Calu3 (cell line): ENCODE measurements at regions of chr15 and their contacts with region 1.

Region 1: DNA sequence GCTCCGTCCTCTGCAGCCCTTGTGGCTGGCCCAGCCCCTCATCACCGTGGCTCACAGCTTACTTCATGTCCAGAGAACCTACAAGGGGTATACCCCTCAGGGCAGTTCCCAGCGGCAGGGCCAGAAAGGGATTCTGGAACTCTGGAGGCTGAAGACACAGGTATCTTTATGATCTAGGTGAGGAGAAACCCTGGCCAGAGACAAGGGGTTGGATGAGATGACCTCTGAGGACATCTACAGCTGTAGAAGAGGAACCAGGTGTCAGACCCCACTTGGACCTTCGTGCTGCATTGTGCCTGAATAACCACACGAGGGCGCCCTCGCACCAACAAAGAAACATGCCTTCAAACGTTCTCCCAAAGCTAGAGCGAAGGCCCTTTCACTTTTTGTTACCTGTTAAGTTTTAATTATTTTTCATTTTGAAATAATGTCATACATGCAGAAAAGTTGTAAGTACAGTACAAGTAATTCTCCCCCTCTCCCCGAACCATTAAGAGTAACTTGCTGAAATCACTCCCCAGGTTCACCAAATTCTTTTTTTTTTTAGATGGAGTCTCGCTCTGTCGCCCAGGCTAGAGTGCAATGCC is 118.7 kb upstream of the SMAD3 start:
- DNase-seq: peak; percentile 80
- H3K4me3 Mint-ChIP-seq: no peak overlapping the region
- H3K27ac Mint-ChIP-seq: no peak overlapping the region
- H3K4me1 Mint-ChIP-seq: peaks cover 37% of the 10 kb centered on the region
- H3K27me3 Mint-ChIP-seq: no peaks in the 10 kb centered on the region
- CTCF ChIP-seq: peak; percentile 94

Region 2: GRCh38 chr15:66931768-66932633 is 14.7 kb before region 1 on chr15:
- CTCF ChIA-PET with region 1: interaction called, 21 read pairs
- intact Hi-C with region 1: no loop called
- DNase-seq: peak; percentile 89
- H3K4me3 Mint-ChIP-seq: peak overlapping the region; percentile 57
- H3K27ac Mint-ChIP-seq: peak overlapping the region; percentile 80
- H3K4me1 Mint-ChIP-seq: peaks cover 45% of the 10 kb centered on the region
- H3K27me3 Mint-ChIP-seq: no peaks in the 10 kb centered on the region
- CTCF ChIP-seq: no peak

Region 3: GRCh38 chr15:66968806-66969596 is 22.3 kb after region 1 on chr15:
- CTCF ChIA-PET with region 1: no interaction called
- intact Hi-C with region 1: no loop called
- DNase-seq: no peak
- H3K4me3 Mint-ChIP-seq: no peak overlapping the region
- H3K27ac Mint-ChIP-seq: no peak overlapping the region
- H3K4me1 Mint-ChIP-seq: no peaks in the 10 kb centered on the region
- H3K27me3 Mint-ChIP-seq: no peaks in the 10 kb centered on the region
- CTCF ChIP-seq: no peak

Region 4: DNA sequence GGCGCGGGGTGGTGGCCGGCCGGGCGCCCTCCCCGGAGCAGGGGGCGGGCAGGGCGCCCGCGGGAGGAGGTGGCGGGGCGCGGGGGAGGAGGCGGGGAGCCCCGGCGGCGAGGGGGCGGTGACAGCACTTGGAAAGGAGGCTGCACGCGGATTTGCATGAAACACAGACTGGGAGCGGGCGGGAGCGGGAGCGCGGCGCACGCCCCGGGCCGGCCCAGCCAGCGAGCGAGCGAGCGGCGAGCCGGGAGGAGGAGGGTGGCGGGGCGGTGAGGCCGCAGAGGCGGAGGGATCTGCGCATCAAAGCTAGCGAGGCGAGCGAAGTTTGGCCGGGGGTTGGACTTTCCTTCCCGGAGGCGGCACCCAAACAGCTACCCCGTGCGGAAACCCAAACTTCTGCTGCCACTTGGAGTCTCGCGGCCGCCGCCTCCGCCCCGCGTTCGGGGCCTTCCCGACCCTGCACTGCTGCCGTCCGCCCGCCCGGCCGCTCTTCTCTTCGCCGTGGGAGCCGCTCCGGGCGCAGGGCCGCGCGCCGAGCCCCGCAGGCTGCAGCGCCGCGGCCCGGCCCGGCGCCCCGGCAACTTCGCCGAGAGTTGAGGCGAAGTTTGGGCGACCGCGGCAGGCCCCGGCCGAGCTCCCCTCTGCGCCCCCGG is 118.9 kb after region 1 on chr15 and contains the start of gene SMAD3:
- CTCF ChIA-PET with region 1: interaction called, 5 read pairs
- intact Hi-C with region 1: loop called (anchors 2 kb)
- DNase-seq: peak; percentile 94
- H3K4me3 Mint-ChIP-seq: peak within 1 kb of the TSS; percentile 85
- H3K27ac Mint-ChIP-seq: peak within 1 kb of the TSS; percentile 80
- H3K4me1 Mint-ChIP-seq: peaks cover 54% of the 10 kb centered on the region
- H3K27me3 Mint-ChIP-seq: no peaks in the 10 kb centered on the region
- CTCF ChIP-seq: no peak
- total RNA-seq, gene SMAD3: 121 and 147 TPM in 2 replicates

Region 5: GRCh38 chr15:67175643-67176071 is 229.0 kb after region 1 on chr15:
- CTCF ChIA-PET with region 1: interaction called, 5 read pairs
- intact Hi-C with region 1: loop called (anchors 10 kb)
- DNase-seq: no peak
- H3K4me3 Mint-ChIP-seq: peak overlapping the region; percentile 22
- H3K27ac Mint-ChIP-seq: peak overlapping the region; percentile 58
- H3K4me1 Mint-ChIP-seq: peaks cover 71% of the 10 kb centered on the region
- H3K27me3 Mint-ChIP-seq: no peaks in the 10 kb centered on the region
- CTCF ChIP-seq: no peak

Region 6: DNA sequence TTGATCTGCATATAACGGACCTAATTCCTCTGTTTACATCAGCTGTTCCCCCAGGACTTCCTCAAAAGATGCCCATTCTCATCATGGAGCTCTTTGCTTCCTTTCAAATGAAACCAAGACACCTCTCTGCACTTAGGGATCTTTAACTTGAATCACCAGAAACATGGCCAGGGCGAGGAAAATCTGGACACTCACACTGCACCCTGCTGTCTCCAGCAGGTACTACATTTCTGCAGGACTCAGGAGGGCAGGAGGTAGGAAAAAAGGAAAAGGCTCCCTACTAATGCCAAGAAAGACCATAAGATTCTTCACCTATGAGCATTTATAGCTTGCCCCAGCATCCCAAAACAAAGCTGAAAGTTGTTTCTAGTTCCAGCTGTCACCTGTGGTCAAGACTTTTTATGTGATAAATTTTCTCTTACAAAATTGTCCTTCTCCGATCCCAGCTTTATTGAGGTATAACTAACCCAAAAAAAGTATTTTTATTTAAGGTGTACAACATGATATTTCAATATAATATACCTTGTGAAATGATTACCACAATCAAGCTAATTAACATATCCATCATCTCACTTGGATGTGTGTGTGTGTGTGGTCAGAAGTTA is 486.9 kb after region 1 on chr15:
- CTCF ChIA-PET with region 1: interaction called, 3 read pairs
- intact Hi-C with region 1: loop called (anchors 5 kb)
- DNase-seq: peak; percentile 69
- H3K4me3 Mint-ChIP-seq: no peak overlapping the region
- H3K27ac Mint-ChIP-seq: no peak overlapping the region
- H3K4me1 Mint-ChIP-seq: no peaks in the 10 kb centered on the region
- H3K27me3 Mint-ChIP-seq: no peaks in the 10 kb centered on the region
- CTCF ChIP-seq: peak; percentile 80